GM23248 (cell line): ENCODE measurements at regions of chr12 and their contacts with region 1.

Region 1: DNA sequence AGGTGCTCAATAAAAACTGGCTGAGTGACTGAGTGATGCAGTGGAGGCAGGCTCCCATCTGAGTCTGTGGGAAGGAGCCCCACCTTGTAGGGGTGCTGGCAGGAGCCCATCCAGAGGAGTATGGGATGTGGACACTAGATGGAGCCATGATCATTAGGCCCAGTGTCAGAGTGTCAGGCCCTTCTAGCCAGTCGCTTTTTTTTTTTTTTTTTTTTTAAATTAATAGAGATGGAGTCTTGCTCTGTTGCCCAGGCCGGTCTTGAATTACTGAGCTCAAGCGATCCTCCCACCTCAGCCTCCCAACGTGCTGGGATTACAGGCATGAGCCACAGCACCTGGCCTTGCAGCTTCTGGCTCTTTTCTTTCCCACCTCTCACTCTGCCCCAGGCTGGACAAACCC is 11.5 kb downstream of the RITA1 start:
- DNase-seq: peak; percentile 89
- H3K4me3 ChIP-seq: no peak overlapping the region
- H3K27ac ChIP-seq: no peak overlapping the region
- H3K4me1 ChIP-seq: peaks cover 22% of the 10 kb centered on the region
- H3K27me3 ChIP-seq: no peaks in the 10 kb centered on the region

Region 2: DNA sequence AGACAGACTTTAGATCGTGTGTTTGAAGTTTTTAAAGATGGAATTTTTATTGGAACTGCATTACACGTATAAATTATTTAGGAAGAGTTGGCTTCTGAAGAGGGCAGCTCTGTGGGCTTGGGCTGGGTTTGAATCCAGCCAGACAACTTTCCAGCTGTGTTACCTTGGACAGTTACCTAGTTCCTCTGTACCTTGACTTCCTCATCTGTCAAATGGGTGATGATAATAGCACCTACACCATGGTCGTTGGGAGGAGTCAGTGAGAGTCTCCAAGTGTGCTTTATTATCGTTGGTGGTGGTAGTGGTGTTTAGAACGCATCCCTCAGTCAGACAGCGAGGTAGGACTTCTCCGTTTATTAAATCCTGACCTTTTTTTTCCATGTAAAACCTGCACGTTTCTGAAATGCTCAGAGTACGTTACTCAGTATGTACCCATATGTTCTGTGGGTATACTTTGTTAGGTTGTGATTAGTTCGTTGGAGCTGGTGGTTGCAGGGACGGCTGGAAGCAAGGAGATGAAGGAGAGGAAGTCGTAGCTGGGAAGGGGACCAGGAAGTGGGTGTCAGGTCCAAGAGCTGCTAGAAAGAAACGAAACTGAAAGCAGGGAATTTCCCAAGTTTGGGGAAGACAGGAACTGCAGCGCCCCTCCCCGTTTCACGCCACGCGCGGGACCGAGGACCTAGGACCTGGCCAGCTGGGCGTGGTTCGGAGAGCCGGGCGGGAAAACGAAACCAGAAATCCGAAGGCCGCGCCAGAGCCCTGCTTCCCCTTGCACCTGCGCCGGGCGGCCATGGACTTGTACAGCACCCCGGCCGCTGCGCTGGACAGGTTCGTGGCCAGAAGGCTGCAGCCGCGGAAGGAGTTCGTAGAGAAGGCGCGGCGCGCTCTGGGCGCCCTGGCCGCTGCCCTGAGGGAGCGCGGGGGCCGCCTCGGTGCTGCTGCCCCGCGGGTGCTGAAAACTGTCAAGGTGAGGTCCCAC is 259.0 kb before region 1 on chr12 and contains the start of gene OAS3:
- in situ Hi-C with region 1: no loop called
- DNase-seq: peak; percentile 71
- H3K4me3 ChIP-seq: peak within 1 kb of the TSS; percentile 77
- H3K27ac ChIP-seq: no peak within 1 kb of the TSS
- H3K4me1 ChIP-seq: no peaks in the 10 kb centered on the region
- H3K27me3 ChIP-seq: no peaks in the 10 kb centered on the region
- total RNA-seq, gene OAS3: 0.22 and 0.38 TPM in 2 replicates

Region 3: GRCh38 chr12:113422030-113422885 is 225.3 kb after region 1 on chr12 and contains the start of gene SDSL:
- in situ Hi-C with region 1: loop called (anchors 10 kb)
- DNase-seq: peak; percentile 89
- H3K4me3 ChIP-seq: peak within 1 kb of the TSS; percentile 78
- H3K27ac ChIP-seq: peak within 1 kb of the TSS; percentile 5; the same call in 1 of the 2 replicates
- H3K4me1 ChIP-seq: 0 out of 2 replicates have a peak, but pooled peaks cover 5% of the 10 kb centered on the region
- H3K27me3 ChIP-seq: no peaks in the 10 kb centered on the region
- total RNA-seq, gene SDSL: 5.1 and 6.3 TPM in 2 replicates

Region 4: DNA sequence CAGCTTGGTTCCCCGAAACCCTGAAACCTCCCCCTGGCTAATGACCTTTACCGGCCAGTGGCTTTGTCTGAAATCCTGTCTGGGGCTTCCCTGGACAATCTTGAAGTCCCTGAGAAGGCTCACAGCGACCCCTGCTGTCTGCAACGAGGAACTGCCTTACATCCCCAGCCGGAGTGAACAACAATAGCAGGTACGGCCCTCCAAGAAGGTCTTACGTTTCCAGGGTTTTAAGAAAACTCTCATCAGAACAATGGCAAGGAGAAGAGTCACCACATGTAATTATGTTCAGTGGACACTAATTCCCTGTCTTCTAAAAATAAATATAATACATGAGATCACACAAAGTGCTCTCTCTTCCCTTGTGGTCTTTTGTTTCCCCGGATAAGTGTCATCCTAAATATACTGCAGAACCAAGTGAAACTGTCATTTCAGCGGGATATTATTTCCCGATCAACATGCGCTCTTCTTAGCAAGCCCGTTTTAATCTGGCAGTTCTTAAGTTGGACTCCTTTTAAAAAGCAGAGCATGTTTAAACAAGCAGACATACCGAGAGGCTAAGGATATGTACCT is 715.8 kb after region 1 on chr12:
- in situ Hi-C with region 1: loop called (anchors 10 kb)
- DNase-seq: peak; percentile 67
- H3K4me3 ChIP-seq: no peak overlapping the region
- H3K27ac ChIP-seq: no peak overlapping the region
- H3K4me1 ChIP-seq: no peaks in the 10 kb centered on the region
- H3K27me3 ChIP-seq: no peaks in the 10 kb centered on the region